ENCODE measurements at regions of chr12 and their contacts with region 1.

Region 1: GRCh38 chr12:24268663-24269186 is 319.3 kb upstream of the SOX5 start:
- DNase-seq: no peak
- ATAC-seq: no peak
- H3K4me3 ChIP-seq: no peak overlapping the region
- H3K4me3 Mint-ChIP-seq: no peak overlapping the region
- H3K27ac ChIP-seq: no peak overlapping the region
- H3K27ac Mint-ChIP-seq: no peak overlapping the region
- H3K4me1 ChIP-seq: no peaks in the 10 kb centered on the region
- H3K4me1 Mint-ChIP-seq: no peaks in the 10 kb centered on the region
- H3K27me3 ChIP-seq: no peaks in the 10 kb centered on the region
- H3K27me3 Mint-ChIP-seq: no peaks in the 10 kb centered on the region
- CTCF ChIP-seq: no peak

Region 2: DNA sequence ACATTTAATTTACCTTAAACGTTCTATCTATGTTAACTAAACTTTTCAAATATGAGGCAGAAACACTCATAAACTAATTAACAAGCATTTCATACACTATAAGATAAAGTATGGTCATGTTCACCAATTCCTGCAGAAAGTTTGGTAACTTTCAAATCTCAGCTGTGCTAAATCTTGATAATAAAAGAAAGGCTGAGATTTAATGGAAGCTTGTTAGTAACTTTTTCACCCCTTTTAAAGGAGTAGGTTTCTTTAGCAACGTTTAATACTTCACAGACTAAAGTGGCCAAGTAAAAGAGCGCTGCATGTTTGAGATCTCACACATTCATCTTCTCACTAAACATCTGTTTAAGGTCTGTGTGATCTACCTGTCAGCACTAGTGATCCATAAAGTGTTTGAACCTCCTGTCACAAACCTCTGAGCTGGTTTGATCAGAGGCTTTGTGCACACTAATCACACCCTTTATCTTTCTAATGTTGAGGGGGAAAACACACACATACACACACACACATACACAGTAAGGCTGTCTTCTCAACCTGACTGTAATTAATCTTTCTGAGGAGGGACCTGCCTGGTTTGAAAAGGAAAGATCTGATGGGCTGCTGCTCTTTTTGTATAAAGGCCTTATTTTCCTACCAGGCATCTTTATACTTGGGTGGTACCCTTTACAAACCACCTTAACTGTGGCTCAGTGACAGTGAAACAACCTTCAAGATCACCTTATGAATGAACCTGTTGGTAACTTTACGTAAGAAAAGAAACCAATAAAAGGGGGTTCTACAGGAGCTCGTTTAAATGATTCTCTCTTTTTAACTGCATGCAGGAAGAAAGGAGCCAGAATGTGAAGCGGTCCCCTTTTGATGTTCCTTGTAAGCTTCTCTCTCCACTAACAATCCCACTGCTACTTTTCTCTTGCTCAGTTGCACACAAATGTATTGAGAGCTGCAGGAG is 563.5 kb before region 1 on chr12:
- CTCF ChIA-PET with region 1: no interaction called
- POLR2A ChIA-PET with region 1: no interaction called
- intact Hi-C with region 1: no loop called
- DNase-seq: no peak
- ATAC-seq: no peak
- H3K4me3 ChIP-seq: no peak overlapping the region
- H3K4me3 Mint-ChIP-seq: no peak overlapping the region
- H3K27ac ChIP-seq: no peak overlapping the region
- H3K27ac Mint-ChIP-seq: no peak overlapping the region
- H3K4me1 ChIP-seq: no peaks in the 10 kb centered on the region
- H3K4me1 Mint-ChIP-seq: no peaks in the 10 kb centered on the region
- H3K27me3 ChIP-seq: no peaks in the 10 kb centered on the region
- H3K27me3 Mint-ChIP-seq: no peaks in the 10 kb centered on the region
- CTCF ChIP-seq: no peak

Region 3: GRCh38 chr12:24838531-24838950 is 569.8 kb after region 1 on chr12:
- CTCF ChIA-PET with region 1: no interaction called
- POLR2A ChIA-PET with region 1: no interaction called
- intact Hi-C with region 1: loop called (anchors 10 kb)
- DNase-seq: peak; percentile 4
- ATAC-seq: no peak
- H3K4me3 ChIP-seq: no peak overlapping the region
- H3K4me3 Mint-ChIP-seq: no peak overlapping the region
- H3K27ac ChIP-seq: no peak overlapping the region
- H3K27ac Mint-ChIP-seq: no peak overlapping the region
- H3K4me1 ChIP-seq: peaks cover 0 to 13% of the 10 kb centered on the region in 2 donors
- H3K4me1 Mint-ChIP-seq: peaks cover 13% of the 10 kb centered on the region
- H3K27me3 ChIP-seq: no peaks in the 10 kb centered on the region
- H3K27me3 Mint-ChIP-seq: no peaks in the 10 kb centered on the region
- CTCF ChIP-seq: no peak

Measured in B cell (primary cell).